ACHN (cell line): ENCODE measurements at regions of chr15 and their contacts with region 1.

Region 1: GRCh38 chr15:69265347-69265955 is 33.3 kb upstream of the PAQR5 start:
- DNase-seq: peak; percentile 45

Region 2: GRCh38 chr15:69058830-69059556 is 206.5 kb before region 1 on chr15:
- in situ Hi-C with region 1: loop called (anchors 25 kb)
- DNase-seq: peak; percentile 81

Region 3: GRCh38 chr15:69090197-69090948 is 175.1 kb before region 1 on chr15:
- in situ Hi-C with region 1: no loop called
- DNase-seq: no peak

Region 4: GRCh38 chr15:69128667-69129321 is 136.7 kb before region 1 on chr15:
- in situ Hi-C with region 1: no loop called
- DNase-seq: no peak